MCF 10A (cell line): ENCODE measurements at regions of chr3 and their contacts with region 1.

Region 1: GRCh38 chr3:48918388-48919214 is at the start of gene ARIH2:
- DNase-seq: peak; percentile 92
- H3K4me3 Mint-ChIP-seq: peak within 1 kb of the TSS; percentile 95
- H3K27ac Mint-ChIP-seq: peak within 1 kb of the TSS; percentile 96
- H3K4me1 Mint-ChIP-seq: no peaks in the 10 kb centered on the region
- H3K27me3 Mint-ChIP-seq: no peaks in the 10 kb centered on the region
- CTCF ChIP-seq: no peak
- total RNA-seq, gene ARIH2: 152 and 167 TPM in 2 replicates

Region 2: DNA sequence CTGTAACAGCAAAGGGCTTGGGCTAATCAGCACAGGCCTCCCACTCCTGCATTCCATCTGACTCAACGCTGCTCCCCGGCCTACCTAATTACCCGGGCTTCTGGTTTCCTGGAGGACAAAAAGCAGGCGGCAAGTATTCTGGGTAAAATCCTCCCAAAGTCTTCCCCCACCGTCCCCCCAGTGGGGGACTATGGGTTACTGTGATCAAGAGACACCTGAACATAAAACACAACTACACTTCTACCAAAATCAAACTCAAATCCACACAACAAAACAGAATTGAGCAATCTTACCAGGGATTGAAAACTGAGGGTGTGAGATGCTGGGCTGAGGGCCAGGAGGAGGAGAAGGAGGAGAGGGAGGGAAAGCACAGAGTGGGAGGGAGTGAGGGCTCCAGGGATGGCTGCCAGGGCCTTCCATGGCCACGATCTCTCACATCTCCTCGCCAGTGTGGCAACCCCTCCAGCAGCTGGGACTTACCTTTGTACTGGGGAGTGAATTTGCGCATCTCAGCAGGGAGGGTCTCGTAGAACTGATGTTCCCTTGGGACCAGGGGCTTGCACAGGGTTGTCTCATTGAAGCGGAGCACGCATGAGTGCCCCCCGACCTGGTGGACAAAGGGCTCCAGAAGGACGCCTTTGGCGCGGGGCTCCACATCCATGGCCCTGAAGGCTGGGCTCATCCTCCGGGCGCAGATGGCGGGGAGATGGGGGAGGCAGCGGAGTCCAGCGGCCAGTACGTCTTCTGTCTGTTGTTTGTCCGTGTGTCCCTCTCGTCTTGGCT is 223.8 kb before region 1 on chr3:
- CTCF ChIA-PET with region 1: no interaction called
- POLR2A ChIA-PET with region 1: interaction called, 5 read pairs
- intact Hi-C with region 1: loop called (anchors 10 kb)
- DNase-seq: peak; percentile 97
- H3K4me3 Mint-ChIP-seq: peak overlapping the region; percentile 85
- H3K27ac Mint-ChIP-seq: peak overlapping the region; percentile 89
- H3K4me1 Mint-ChIP-seq: peaks cover 27% of the 10 kb centered on the region
- H3K27me3 Mint-ChIP-seq: no peaks in the 10 kb centered on the region
- CTCF ChIP-seq: no peak

Region 3: DNA sequence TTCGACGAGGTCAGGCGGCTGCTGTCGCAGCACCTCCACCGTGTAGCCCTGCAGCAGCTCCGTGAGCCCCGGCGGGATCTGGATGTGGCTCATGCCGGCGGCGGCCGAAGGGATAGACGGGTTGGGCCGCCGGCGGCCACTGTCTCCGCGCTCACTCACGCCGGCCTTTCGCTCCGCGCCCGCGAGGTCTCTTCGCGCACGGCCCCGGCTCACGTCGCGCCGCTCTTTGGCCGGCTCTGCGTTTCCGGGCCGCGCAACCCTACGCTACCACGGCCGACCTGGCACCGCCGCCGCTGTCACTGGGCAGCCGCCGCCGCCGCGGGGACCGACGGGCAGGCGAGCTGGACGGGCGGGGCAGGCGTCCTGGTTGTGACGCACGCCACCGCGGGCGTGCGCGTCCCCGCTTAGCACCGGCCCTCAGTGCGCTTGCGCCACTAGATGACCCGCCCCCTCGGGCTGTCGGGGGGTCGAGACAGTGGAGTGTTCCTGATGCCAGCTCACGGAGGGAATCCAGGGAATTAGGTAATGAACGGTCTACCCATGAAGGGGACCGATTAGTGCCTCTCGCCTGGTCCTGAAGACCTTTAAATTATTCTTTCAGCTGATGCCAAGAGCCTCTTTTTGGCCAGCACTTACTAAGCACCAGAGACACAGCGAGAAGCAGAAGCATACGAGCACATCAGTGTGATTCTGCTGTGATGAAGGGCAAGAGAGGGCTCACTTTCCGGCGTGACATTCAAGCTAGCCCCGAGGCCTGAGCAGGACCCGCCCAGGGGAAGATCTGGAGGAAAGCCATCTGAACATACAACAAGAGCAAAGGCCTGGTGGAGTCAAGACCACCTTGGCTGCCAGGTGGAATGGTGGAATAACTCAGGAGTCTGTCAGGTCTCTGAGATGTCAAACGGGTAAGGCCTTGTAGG is 70.8 kb before region 1 on chr3 and contains the start of gene PRKAR2A:
- CTCF ChIA-PET with region 1: interaction called, 3 read pairs
- POLR2A ChIA-PET with region 1: interaction called, 45 read pairs
- intact Hi-C with region 1: loop called (anchors 2 kb)
- DNase-seq: peak; percentile 85
- H3K4me3 Mint-ChIP-seq: peak within 1 kb of the TSS; percentile 87
- H3K27ac Mint-ChIP-seq: peak within 1 kb of the TSS; percentile 93
- H3K4me1 Mint-ChIP-seq: peaks cover 13% of the 10 kb centered on the region
- H3K27me3 Mint-ChIP-seq: no peaks in the 10 kb centered on the region
- CTCF ChIP-seq: no peak
- total RNA-seq, gene PRKAR2A: 51.3 and 61.3 TPM in 2 replicates

Region 4: DNA sequence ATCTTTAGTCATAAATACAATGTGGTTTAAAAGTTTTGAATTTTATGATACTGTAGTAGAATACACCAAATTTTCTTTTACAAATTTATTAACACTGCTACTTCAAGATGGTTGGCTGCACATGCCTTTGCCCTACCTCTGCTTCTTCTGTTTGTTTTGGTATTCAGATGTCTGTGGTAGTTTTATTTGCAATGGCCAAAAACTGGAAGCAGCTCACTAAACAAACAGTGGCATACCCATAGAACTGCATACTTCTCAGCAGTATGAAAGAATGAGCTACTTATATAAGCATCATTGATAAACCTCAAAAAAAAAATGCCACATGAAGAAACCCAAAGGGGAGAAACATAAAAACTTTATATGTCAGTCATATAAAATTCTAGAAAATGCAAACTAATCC is 19.6 kb after region 1 on chr3:
- CTCF ChIA-PET with region 1: no interaction called
- POLR2A ChIA-PET with region 1: interaction called, 11 read pairs
- intact Hi-C with region 1: no loop called
- DNase-seq: no peak
- H3K4me3 Mint-ChIP-seq: no peak overlapping the region
- H3K27ac Mint-ChIP-seq: no peak overlapping the region
- H3K4me1 Mint-ChIP-seq: peaks cover 4% of the 10 kb centered on the region
- H3K27me3 Mint-ChIP-seq: no peaks in the 10 kb centered on the region
- CTCF ChIP-seq: no peak

Region 5: GRCh38 chr3:49021813-49022687 is 103.4 kb after region 1 on chr3 and contains the start of gene NDUFAF3:
- CTCF ChIA-PET with region 1: interaction called, 3 read pairs
- POLR2A ChIA-PET with region 1: interaction called, 34 read pairs
- intact Hi-C with region 1: no loop called
- DNase-seq: peak; percentile 93
- H3K4me3 Mint-ChIP-seq: peak within 1 kb of the TSS; percentile 89
- H3K27ac Mint-ChIP-seq: peak within 1 kb of the TSS; percentile 95
- H3K4me1 Mint-ChIP-seq: peaks cover 13% of the 10 kb centered on the region
- H3K27me3 Mint-ChIP-seq: no peaks in the 10 kb centered on the region
- CTCF ChIP-seq: peak; percentile 95
- total RNA-seq, gene NDUFAF3: 77.8 and 86.5 TPM in 2 replicates

Region 6: GRCh38 chr3:49053543-49053942 is 134.9 kb after region 1 on chr3:
- CTCF ChIA-PET with region 1: no interaction called
- POLR2A ChIA-PET with region 1: no interaction called
- intact Hi-C with region 1: no loop called
- DNase-seq: no peak
- H3K4me3 Mint-ChIP-seq: no peak overlapping the region
- H3K27ac Mint-ChIP-seq: no peak overlapping the region
- H3K4me1 Mint-ChIP-seq: peaks cover 14% of the 10 kb centered on the region
- H3K27me3 Mint-ChIP-seq: no peaks in the 10 kb centered on the region
- CTCF ChIP-seq: no peak